Activated CD4-positive, alpha-beta memory T cell treated with anti-CD3 and anti-CD28 coated beads for 36 hours (primary cell): ENCODE measurements at regions of chr16 and their contacts with region 1.

Region 1: DNA sequence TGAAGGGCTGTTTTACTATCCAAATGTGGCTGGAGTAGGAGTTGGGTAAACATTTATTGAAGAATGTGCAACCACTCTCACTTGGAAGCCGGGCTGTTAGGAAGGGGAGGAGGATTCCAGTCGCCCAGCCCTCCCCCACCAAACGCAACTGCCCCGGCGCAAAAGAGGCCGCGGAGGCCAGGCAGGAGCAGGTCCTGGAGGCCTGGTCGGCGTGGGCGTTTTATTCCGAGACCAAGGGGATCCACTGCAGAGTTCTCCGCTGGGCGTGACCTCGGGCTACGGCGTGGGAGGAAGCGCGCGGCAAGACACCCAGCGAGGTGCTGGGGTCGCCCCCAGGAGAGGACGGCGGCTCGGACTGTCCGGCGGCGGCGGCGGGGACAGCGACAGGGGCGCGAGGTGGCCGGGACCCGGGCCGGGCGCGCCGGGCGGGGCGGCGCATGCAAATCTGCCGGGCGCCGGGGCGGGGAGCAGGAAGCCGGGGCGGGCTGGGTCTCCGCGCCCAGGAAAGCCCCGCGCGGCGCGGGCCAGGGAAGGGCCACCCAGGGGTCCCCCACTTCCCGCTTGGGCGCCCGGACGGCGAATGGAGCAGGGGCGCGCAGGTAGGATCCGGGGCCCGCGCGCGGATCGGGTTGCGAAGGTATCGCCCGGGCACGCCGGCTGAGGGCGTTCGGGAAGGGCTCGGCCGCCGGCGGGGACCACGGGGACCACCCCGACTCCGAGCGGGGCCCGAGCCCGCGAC is at the start of gene IL4R:
- DNase-seq: peak; percentile 86
- H3K4me3 Mint-ChIP-seq: peak within 1 kb of the TSS; percentile 94
- H3K27ac Mint-ChIP-seq: peak within 1 kb of the TSS; percentile 96
- H3K4me1 Mint-ChIP-seq: peaks cover 41% of the 10 kb centered on the region
- H3K27me3 Mint-ChIP-seq: no peaks in the 10 kb centered on the region
- total RNA-seq, gene IL4R: 146 to 153 TPM

Region 2: GRCh38 chr16:26717826-26718225 is 595.8 kb before region 1 on chr16:
- CTCF ChIA-PET with region 1: no interaction called
- POLR2A ChIA-PET with region 1: no interaction called
- intact Hi-C with region 1: no loop called
- DNase-seq: no peak
- H3K4me3 Mint-ChIP-seq: no peak overlapping the region
- H3K27ac Mint-ChIP-seq: no peak overlapping the region
- H3K4me1 Mint-ChIP-seq: no peaks in the 10 kb centered on the region
- H3K27me3 Mint-ChIP-seq: no peaks in the 10 kb centered on the region

Region 3: DNA sequence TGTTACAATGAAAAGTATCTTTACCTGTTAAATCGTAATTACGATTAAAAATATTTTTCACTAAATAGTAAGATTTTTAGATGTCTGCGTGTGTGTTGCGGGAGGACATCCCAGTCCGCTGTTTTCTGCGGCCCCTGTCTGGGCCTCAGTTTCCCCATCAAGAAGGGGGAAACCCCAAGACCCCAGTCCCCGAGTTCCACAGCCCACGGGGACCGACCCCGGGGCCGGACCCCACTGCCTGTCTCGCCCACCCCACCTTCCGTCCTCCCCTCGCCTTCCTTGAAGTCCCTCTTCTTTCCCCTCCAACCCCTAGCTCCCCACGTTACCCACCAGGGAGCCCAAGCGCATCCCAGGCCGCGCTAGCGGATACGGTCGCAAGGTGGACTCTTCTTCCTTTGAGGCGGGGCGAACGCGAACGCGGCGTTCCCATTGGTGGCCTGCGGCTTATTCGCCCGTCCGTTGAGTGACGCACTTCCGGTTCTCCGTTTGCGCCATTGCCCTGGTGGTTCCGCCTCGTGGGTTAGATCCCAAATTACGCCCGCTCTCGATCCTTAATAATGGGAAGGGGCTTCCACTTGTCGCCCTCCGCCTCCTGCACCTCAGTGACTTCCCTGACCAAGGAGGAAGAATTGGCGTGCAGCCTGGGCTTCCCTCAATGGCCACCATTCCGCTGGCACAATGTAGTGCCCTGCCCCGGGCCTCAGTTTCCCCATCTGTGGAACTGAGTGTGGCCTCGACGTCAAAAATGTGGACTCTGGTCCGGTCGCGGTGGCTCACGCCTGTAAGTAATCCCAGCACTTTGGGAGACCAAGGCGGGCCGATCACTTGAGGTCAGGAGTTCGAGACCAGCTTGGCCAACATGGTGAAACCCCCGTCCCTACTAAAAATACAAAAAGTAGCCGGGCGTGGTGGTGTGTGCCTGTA is 45.0 kb before region 1 on chr16 and contains the start of gene NSMCE1:
- CTCF ChIA-PET with region 1: interaction called, 8 read pairs
- POLR2A ChIA-PET with region 1: interaction called, 16 read pairs
- intact Hi-C with region 1: loop called (anchors 2 kb)
- DNase-seq: peak; percentile 98
- H3K4me3 Mint-ChIP-seq: peak within 1 kb of the TSS; percentile 89
- H3K27ac Mint-ChIP-seq: peak within 1 kb of the TSS; percentile 92
- H3K4me1 Mint-ChIP-seq: peaks cover 64% of the 10 kb centered on the region
- H3K27me3 Mint-ChIP-seq: no peaks in the 10 kb centered on the region
- total RNA-seq, gene NSMCE1: 120 to 121 TPM

Region 4: GRCh38 chr16:27273670-27274423 is 39.7 kb before region 1 on chr16:
- CTCF ChIA-PET with region 1: interaction called, 8 read pairs
- POLR2A ChIA-PET with region 1: interaction called, 16 read pairs
- intact Hi-C with region 1: loop called (anchors 2 kb)
- DNase-seq: peak; percentile 57
- H3K4me3 Mint-ChIP-seq: no peak overlapping the region
- H3K27ac Mint-ChIP-seq: peak overlapping the region; percentile 89
- H3K4me1 Mint-ChIP-seq: peaks cover 57% of the 10 kb centered on the region
- H3K27me3 Mint-ChIP-seq: peaks cover 3% of the 10 kb centered on the region

Region 5: DNA sequence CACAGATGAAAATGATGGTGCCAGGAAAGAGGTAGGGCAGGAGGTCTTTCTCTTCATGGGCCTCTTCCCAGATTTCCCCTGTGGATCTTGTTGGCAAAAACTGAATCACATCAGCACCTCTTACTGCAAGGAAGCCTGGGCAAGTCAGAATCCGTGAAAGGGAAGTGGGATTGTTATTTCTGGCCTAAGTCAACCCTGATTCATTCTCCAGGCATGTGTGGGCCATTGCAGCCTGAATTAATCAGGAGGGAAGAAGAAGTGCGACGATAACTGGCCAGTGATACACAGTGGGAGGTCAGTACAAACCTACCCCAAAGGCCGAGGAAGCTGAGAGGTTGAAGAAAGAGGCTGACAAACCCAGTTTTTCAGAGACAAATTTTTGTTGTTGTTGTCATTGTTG is 27.1 kb before region 1 on chr16:
- CTCF ChIA-PET with region 1: no interaction called
- POLR2A ChIA-PET with region 1: interaction called, 10 read pairs
- intact Hi-C with region 1: loop called (anchors 1 kb)
- DNase-seq: peak; percentile 4
- H3K4me3 Mint-ChIP-seq: no peak overlapping the region
- H3K27ac Mint-ChIP-seq: no peak overlapping the region
- H3K4me1 Mint-ChIP-seq: peaks cover 74% of the 10 kb centered on the region
- H3K27me3 Mint-ChIP-seq: peaks cover 3% of the 10 kb centered on the region

Region 6: DNA sequence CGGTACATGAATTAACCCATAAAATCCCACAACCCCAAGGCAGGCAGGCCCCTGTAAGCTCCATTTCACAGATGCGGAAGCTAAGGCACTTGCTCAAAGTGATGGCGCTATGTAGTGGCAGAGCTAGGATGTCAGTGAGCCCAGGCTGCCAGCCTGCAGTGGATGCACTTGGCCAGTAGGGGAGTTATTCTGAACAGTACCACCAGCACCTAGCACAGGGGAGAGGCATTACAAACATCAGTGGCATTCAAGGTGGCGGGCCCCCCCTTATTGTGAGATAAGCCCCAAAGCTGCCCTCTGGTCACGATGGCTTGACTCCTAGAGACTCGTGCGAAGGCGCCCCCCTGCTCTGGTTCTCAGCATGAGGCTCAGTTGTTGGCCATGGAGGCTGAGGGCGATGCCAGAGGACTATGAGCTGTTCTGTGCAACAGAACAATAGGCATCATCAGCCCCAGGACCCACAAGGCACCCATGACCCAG is 202.3 kb after region 1 on chr16:
- CTCF ChIA-PET with region 1: no interaction called
- POLR2A ChIA-PET with region 1: no interaction called
- intact Hi-C with region 1: no loop called
- DNase-seq: peak; percentile 39
- H3K4me3 Mint-ChIP-seq: no peak overlapping the region
- H3K27ac Mint-ChIP-seq: no peak overlapping the region
- H3K4me1 Mint-ChIP-seq: no peaks in the 10 kb centered on the region
- H3K27me3 Mint-ChIP-seq: no peaks in the 10 kb centered on the region